ENCODE measurements at regions of chr20 and their contacts with region 1.

Region 1: GRCh38 chr20:47610247-47610944 is 108.7 kb downstream of the NCOA3 start:
- DNase-seq: peak in 1 of 2 donors; percentile 61
- ATAC-seq: peak; percentile 55 to 90 (median 80)
- H3K4me3 ChIP-seq: no peak overlapping the region
- H3K27ac ChIP-seq: peak overlapping the region in 4 of 10 donors; percentile 17 to 74 (median 28)
- H3K4me1 ChIP-seq: peaks cover 0 to 85% (median 40%) of the 10 kb centered on the region in 9 donors
- H3K27me3 ChIP-seq: no peaks in the 10 kb centered on the region
- CTCF ChIP-seq: no peak

Region 2: GRCh38 chr20:47392015-47392720 is 218.2 kb before region 1 on chr20:
- intact Hi-C with region 1: loop called in 3 of 10 experiments (anchors 5 to 10 kb)
- DNase-seq: no peak
- ATAC-seq: peak in 7 of 8 donors; percentile 39 to 90 (median 54)
- H3K4me3 ChIP-seq: no peak overlapping the region
- H3K27ac ChIP-seq: peak overlapping the region in 2 of 10 donors; percentile 56 to 66
- H3K4me1 ChIP-seq: peaks cover 0 to 14% (median 0%) of the 10 kb centered on the region in 9 donors
- H3K27me3 ChIP-seq: no peaks in the 10 kb centered on the region
- CTCF ChIP-seq: no peak

Region 3: DNA sequence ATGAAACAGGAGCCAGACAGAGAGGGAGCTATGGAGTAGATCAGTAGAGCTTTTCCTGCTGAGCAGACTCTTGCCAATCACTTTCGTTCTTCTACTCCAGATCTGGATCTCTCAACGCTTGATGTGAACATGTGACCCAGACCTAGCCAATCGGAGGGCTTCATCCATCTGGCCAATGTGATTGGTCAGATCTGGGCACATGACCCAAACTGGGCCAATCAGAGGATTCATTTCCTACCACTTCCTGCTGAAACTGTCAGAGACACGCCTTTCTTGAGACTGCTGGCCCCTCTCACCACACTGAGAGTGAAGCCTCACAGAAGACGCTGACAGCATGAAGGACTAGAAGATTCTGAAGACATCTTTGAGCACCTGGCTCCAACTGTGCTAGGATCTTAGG is 209.7 kb before region 1 on chr20:
- intact Hi-C with region 1: loop called in 4 of 10 experiments (anchors 5 to 10 kb)
- DNase-seq: no peak
- ATAC-seq: no peak
- H3K4me3 ChIP-seq: no peak overlapping the region
- H3K27ac ChIP-seq: no peak overlapping the region
- H3K4me1 ChIP-seq: peaks cover 0 to 11% (median 0%) of the 10 kb centered on the region in 9 donors
- H3K27me3 ChIP-seq: no peaks in the 10 kb centered on the region
- CTCF ChIP-seq: no peak

Region 4: DNA sequence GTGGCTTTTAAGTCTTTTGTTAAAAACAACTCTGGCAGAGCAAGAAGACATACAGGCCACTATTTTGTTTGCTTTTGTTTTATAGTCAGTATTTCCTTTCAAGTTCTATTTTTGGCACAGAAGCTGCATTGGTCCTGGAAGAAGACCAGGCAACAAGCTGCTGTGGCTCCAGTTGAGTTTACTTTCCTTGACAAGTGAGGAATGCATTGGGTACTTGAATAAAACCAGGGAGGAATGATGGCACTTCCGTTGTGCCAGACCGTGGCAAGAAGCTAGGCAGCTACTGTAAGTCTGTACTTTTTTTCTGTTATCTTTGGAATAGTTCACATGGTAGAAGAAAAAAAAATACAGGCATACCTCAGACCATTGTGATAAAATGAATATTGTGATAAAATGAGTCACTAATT is 42.4 kb before region 1 on chr20:
- intact Hi-C with region 1: loop called in 1 of 10 experiments (anchors 10 kb)
- DNase-seq: peak in 1 of 2 donors; percentile 52
- ATAC-seq: peak; percentile 32 to 80 (median 64)
- H3K4me3 ChIP-seq: no peak overlapping the region
- H3K27ac ChIP-seq: peak overlapping the region; percentile 18 to 87 (median 54)
- H3K4me1 ChIP-seq: peaks cover 9 to 64% (median 40%) of the 10 kb centered on the region in 9 donors
- H3K27me3 ChIP-seq: no peaks in the 10 kb centered on the region
- CTCF ChIP-seq: no peak

Region 5: DNA sequence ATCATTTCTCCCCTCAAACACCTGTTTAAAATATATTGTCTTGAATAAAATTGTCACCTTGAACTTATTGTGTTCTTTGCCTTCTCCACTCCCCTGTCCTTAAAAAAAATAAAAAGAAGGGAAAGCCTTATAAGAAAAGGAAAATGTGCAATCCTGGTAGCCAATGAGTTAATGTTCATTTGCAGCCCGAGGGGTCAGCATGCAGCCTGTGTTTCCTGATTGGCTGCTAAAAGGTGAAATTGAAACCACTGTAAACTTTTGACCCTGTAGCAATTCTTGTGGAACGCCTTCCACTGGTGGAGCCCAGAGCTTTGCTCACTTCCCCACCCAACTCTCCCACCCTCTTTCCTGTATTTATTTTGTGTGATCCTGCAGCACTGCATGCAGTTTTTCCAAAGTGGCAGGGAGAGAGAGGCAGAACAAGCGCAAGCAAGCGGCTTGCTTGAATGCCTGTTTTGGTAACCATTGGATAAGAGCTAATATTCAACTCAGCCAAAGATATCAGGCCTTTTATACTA is 33.8 kb before region 1 on chr20:
- intact Hi-C with region 1: loop called in 3 of 10 experiments (anchors 5 kb)
- DNase-seq: peak; percentile 39 to 83
- ATAC-seq: peak; percentile 88 to 97 (median 96)
- H3K4me3 ChIP-seq: peak overlapping the region in 7 of 10 donors; percentile 7 to 40 (median 34)
- H3K27ac ChIP-seq: peak overlapping the region in 9 of 10 donors; percentile 23 to 78 (median 51)
- H3K4me1 ChIP-seq: peaks cover 13 to 90% (median 71%) of the 10 kb centered on the region in 9 donors
- H3K27me3 ChIP-seq: no peaks in the 10 kb centered on the region
- CTCF ChIP-seq: peak in 1 of 9 donors; percentile 14

Region 6: DNA sequence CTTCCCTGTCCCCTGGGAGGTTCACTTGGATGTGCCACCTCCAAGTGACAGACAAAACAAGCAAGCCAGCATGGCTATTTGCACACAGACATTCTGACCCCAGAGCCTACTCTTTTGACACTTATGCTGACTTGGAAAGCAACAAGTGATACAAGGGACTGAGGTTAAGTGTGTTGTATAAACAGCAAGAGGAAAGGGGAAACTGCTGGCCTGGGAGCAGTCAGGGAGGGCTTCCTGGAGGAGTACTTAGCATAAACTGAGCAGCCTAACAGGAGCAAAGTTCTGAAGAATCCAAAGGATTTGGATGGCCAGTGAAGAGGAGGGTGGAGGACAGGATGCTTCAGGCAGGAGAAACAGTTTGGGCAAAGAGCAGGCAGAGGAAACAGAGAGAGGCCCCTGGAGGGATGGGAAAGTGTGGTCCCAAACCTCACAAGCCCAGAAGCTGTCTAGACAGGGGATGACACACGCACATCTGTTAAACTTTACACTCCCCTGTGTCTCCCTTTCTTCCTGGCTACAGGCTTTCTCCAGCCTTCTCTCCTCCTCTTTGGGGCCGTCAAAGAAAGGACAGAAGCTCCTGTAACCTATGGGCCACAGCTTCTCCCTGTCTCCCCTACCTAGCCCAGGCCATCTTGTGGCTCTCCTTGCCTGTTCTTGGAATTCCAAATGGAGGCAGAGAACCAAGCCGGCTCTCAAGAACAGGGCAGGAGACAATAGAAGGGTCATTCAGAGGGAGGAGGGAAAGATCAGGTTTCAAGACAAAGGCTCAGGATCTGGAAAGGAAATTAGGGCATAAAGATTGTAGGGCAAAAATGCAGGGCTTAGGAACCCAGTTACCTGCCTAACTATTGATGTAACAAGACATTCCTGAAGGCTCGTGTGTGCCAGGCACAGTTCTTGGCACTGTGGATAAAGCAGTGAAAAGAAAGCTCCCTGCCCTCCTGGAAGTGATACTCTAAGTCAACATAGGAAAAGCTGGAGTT is 155.6 kb after region 1 on chr20:
- intact Hi-C with region 1: no loop called
- DNase-seq: no peak
- ATAC-seq: peak in 3 of 8 donors; percentile 19 to 28 (median 22)
- H3K4me3 ChIP-seq: no peak overlapping the region
- H3K27ac ChIP-seq: peak overlapping the region in 8 of 10 donors; percentile 34 to 84 (median 59)
- H3K4me1 ChIP-seq: peaks cover 3 to 73% (median 43%) of the 10 kb centered on the region in 9 donors
- H3K27me3 ChIP-seq: peaks cover 0 to 29% (median 17%) of the 10 kb centered on the region in 7 donors
- CTCF ChIP-seq: no peak

Region 7: GRCh38 chr20:47922252-47922651 is 311.9 kb after region 1 on chr20:
- intact Hi-C with region 1: no loop called
- DNase-seq: no peak
- ATAC-seq: no peak
- H3K4me3 ChIP-seq: no peak overlapping the region
- H3K27ac ChIP-seq: no peak overlapping the region
- H3K4me1 ChIP-seq: no peaks in the 10 kb centered on the region
- H3K27me3 ChIP-seq: peaks cover 0 to 45% (median 32%) of the 10 kb centered on the region in 7 donors
- CTCF ChIP-seq: no peak

Measured in heart right ventricle (tissue), 16 donors.